Prostate gland (tissue), 2 donors: ENCODE measurements at regions of chr3 and their contacts with region 1.

Region 1: DNA sequence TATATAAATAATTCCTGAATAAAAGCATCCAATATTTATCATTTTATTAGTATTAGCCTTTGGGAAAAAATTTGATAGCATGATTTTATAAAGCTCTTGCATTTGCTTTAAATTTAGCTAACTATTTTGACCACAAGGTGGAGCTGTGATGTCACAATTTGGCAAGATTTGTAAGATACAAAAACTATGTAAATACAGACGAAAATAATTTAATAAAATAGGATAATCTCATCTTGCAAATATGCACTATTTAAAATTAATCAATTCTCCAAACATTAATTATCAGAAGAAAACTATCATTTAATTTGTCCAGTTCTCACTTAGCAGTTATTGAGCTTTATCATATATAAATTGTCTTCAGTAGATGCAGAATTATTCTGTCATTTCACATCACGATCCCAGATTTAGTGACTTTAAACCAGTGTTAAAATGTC is 95.4 kb downstream of the PLOD2 start:
- DNase-seq: peak; percentile 39
- H3K4me3 ChIP-seq: no peak overlapping the region
- H3K27ac ChIP-seq: no peak overlapping the region
- H3K4me1 ChIP-seq: no peaks in the 10 kb centered on the region
- H3K27me3 ChIP-seq: no peaks in the 10 kb centered on the region
- CTCF ChIP-seq: peak; percentile 77 to 85 (median 84)
- POLR2A ChIP-seq: no peak

Region 2: DNA sequence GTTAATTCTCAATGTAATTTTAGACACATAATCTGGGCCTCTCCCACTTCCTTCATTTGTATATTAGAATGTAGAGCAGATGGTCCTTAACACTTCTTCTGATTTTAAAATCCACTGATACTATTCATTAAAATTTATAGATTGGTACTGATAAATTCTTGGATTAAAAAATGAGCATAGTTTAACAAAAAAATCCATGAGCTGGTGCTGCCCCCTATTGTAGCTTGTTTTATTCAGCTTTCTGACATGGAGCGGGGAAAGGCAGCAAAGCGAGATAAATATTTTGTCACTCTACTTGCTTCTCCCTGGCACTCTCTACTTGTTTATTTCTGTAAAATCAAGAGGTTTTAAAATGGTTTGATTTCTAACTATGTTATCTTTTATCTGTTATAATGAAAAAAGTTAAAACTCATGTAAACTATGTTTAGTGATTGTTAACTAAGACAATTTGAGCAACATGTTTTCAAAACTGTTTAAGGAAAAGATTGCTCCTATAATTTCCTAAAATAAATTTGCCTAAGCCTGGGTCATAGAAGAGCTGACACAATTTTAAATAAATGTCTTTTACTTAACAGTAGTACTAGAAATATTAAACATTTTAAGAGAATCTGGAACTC is 121.9 kb after region 1 on chr3:
- intact Hi-C with region 1: loop called (anchors 2 kb)
- DNase-seq: no peak
- H3K4me3 ChIP-seq: no peak overlapping the region
- H3K27ac ChIP-seq: no peak overlapping the region
- H3K4me1 ChIP-seq: no peaks in the 10 kb centered on the region
- H3K27me3 ChIP-seq: no peaks in the 10 kb centered on the region
- CTCF ChIP-seq: peak in 3 of 4 experiments; percentile 26 to 61 (median 50)
- POLR2A ChIP-seq: no peak

Region 3: GRCh38 chr3:146203776-146204175 is 138.2 kb after region 1 on chr3:
- intact Hi-C with region 1: no loop called
- DNase-seq: no peak
- H3K4me3 ChIP-seq: no peak overlapping the region
- H3K27ac ChIP-seq: no peak overlapping the region
- H3K4me1 ChIP-seq: no peaks in the 10 kb centered on the region
- H3K27me3 ChIP-seq: no peaks in the 10 kb centered on the region
- CTCF ChIP-seq: no peak
- POLR2A ChIP-seq: no peak

Region 4: GRCh38 chr3:146313411-146314111 is 248.0 kb after region 1 on chr3:
- intact Hi-C with region 1: no loop called
- DNase-seq: no peak
- H3K4me3 ChIP-seq: no peak overlapping the region
- H3K27ac ChIP-seq: no peak overlapping the region
- H3K4me1 ChIP-seq: no peaks in the 10 kb centered on the region
- H3K27me3 ChIP-seq: no peaks in the 10 kb centered on the region
- CTCF ChIP-seq: no peak
- POLR2A ChIP-seq: no peak

Region 5: DNA sequence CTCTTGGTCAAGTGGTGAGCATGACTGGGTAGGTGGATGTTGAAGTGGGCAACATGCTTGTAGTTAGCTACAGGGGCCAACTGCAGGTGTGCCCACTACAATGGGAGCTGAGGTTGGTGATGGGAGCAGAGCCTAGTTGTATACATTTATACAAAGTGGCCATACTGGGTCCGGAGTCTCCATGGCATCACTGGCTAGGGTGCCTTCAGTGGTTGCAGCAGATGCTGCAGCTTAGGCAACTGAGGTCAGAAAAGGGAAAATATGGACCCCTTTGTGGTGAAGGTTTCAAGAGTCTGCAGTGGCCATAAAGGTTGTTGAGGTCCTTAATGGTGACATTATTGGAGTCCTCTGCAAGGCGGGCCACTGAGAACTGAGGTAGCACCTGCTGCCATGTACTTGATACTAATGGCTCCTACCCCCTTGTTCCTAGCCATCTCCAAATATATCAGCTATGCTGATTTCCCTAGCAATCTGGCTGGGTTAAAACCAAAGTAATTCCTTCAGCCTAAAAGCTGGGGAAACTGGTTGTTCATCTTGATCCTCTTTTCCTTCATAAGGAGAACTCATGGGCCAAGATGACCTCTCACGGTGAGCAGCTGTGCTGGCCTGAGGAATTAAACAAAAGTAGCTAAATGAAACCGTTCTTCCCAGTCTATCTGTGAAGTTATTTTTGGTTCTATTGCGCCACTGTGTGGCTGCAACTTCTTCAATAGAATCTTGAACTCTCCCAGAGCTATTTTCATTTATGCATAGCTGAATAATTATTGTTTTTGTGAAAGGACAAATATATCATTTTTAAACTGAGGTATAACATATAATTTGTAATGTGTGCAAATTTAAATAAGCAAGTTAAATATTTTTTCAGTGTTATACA is 261.3 kb after region 1 on chr3:
- intact Hi-C with region 1: loop called (anchors 5 kb)
- DNase-seq: no peak
- H3K4me3 ChIP-seq: no peak overlapping the region
- H3K27ac ChIP-seq: no peak overlapping the region
- H3K4me1 ChIP-seq: no peaks in the 10 kb centered on the region
- H3K27me3 ChIP-seq: no peaks in the 10 kb centered on the region
- CTCF ChIP-seq: peak in 3 of 4 experiments; percentile 41 to 68 (median 58)
- POLR2A ChIP-seq: no peak